Naive thymus-derived CD4-positive, alpha-beta T cell (primary cell): ENCODE measurements at regions of chr9 and their contacts with region 1.

Region 1: GRCh38 chr9:131253891-131254491 is 22.3 kb downstream of the FAM78A start:
- DNase-seq: peak in 1 of 9 donors; percentile 7
- ATAC-seq: no peak
- H3K4me3 ChIP-seq: no peak overlapping the region
- H3K4me3 Mint-ChIP-seq: peak overlapping the region; percentile 23 to 87 (median 52)
- H3K27ac ChIP-seq: peak overlapping the region; percentile 16
- H3K27ac Mint-ChIP-seq: peak overlapping the region; percentile 80 to 99 (median 96)
- H3K4me1 ChIP-seq: peaks cover 63 to 73% of the 10 kb centered on the region in 2 donors
- H3K4me1 Mint-ChIP-seq: peaks cover 13 to 74% (median 57%) of the 10 kb centered on the region in 7 donors
- H3K27me3 ChIP-seq: no peaks in the 10 kb centered on the region
- H3K27me3 Mint-ChIP-seq: no peaks in the 10 kb centered on the region

Region 2: DNA sequence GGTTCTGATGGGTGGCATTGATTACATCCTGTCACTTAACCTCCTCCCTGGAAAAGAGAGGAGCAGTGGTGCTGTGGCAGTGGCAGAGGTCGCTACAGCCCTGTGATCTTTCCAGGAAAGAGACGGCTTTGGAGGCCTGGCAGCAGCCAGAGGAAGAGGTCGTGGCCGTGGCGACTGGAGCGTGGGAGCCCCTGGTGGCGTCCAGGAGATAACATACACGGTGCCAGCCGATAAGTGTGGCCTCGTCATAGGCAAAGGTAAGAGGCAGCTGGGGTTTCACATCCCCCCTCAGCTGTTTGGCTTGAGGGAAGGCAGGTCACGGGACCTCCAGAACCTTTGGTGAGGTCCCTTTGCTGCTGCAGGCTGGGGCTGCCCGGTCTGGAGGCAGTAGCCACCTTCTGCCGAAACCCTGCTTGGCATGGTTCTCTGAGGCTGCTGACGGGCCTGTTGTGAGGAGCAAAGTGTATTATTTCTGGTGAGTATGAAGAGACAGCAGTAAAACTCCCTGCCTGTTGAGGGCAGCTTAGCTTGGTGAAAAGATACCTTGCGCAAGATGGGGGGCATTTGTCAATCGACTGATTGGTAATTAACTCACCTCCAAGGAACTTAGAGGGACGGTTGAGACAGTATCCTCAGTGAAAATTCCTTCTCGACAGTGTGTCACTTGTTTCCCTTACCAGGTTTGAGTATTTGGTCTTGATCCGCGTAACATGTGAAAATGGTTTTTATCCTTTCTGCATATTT is 627.6 kb before region 1 on chr9:
- CTCF ChIA-PET with region 1: no interaction called
- POLR2A ChIA-PET with region 1: no interaction called
- intact Hi-C with region 1: no loop called
- DNase-seq: no peak
- ATAC-seq: no peak
- H3K4me3 ChIP-seq: no peak overlapping the region
- H3K4me3 Mint-ChIP-seq: no peak overlapping the region
- H3K27ac ChIP-seq: no peak overlapping the region
- H3K27ac Mint-ChIP-seq: peak overlapping the region in 1 of 9 donors; percentile 52
- H3K4me1 ChIP-seq: no peaks in the 10 kb centered on the region
- H3K4me1 Mint-ChIP-seq: no peaks in the 10 kb centered on the region
- H3K27me3 ChIP-seq: no peaks in the 10 kb centered on the region
- H3K27me3 Mint-ChIP-seq: no peaks in the 10 kb centered on the region

Region 3: DNA sequence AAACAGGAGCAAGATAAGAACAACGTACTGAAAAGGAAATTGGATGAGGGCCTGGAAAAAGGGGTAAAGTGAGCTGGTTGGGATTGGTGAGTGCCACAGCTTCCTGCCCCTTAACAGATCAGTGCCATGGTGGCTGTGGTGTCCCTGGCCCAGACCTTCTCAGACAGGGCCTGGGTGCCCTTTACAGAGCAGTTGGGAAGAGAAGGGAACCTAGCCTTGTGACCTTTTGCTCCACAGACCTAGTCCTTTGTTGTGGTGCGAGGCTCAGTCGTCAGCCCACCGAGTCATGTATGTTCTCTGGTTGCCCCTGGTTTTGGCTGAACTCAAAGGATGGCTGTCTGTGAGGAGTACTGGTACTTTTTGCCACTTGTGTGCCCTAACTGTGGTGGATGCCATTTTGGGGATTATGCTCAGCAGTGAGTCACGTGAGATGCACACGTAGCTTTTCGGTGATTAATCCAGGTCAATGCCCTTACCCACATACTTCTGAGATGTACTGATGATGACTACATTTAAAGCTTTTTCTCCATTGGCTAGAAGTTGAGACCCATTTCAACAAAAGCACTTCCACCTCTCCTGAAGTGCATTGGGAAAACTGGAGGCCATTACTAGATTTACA is 512.1 kb before region 1 on chr9:
- CTCF ChIA-PET with region 1: no interaction called
- POLR2A ChIA-PET with region 1: no interaction called
- intact Hi-C with region 1: no loop called
- DNase-seq: no peak
- ATAC-seq: no peak
- H3K4me3 ChIP-seq: no peak overlapping the region
- H3K4me3 Mint-ChIP-seq: no peak overlapping the region
- H3K27ac ChIP-seq: no peak overlapping the region
- H3K27ac Mint-ChIP-seq: no peak overlapping the region
- H3K4me1 ChIP-seq: no peaks in the 10 kb centered on the region
- H3K4me1 Mint-ChIP-seq: peaks cover 0 to 21% (median 8%) of the 10 kb centered on the region in 7 donors
- H3K27me3 ChIP-seq: no peaks in the 10 kb centered on the region
- H3K27me3 Mint-ChIP-seq: no peaks in the 10 kb centered on the region

Region 4: DNA sequence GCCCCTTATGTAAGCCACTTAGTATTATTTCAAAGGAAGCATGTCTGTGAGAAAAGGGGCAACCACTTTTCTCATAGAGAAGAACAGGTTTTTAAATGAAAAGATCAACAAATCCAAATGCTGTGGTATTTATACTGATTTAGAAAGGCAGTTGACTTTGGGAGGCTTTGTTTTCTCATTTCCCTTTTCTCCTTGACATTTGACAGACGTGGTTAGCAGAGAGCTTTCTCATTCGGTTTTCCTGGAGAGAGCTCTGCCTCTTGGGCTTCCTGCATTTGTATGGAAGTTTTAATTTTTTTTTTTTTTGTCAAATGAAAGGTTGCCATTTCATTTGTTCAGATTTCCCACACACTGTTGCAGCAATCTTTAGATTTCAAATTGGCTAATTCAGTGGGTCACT is 498.0 kb before region 1 on chr9:
- CTCF ChIA-PET with region 1: no interaction called
- POLR2A ChIA-PET with region 1: no interaction called
- intact Hi-C with region 1: no loop called
- DNase-seq: no peak
- ATAC-seq: no peak
- H3K4me3 ChIP-seq: no peak overlapping the region
- H3K4me3 Mint-ChIP-seq: no peak overlapping the region
- H3K27ac ChIP-seq: no peak overlapping the region
- H3K27ac Mint-ChIP-seq: no peak overlapping the region
- H3K4me1 ChIP-seq: no peaks in the 10 kb centered on the region
- H3K4me1 Mint-ChIP-seq: peaks cover 0 to 36% (median 26%) of the 10 kb centered on the region in 7 donors
- H3K27me3 ChIP-seq: no peaks in the 10 kb centered on the region
- H3K27me3 Mint-ChIP-seq: no peaks in the 10 kb centered on the region

Region 5: GRCh38 chr9:131237931-131238401 is 16.0 kb before region 1 on chr9:
- CTCF ChIA-PET with region 1: interaction called, 4 read pairs
- POLR2A ChIA-PET with region 1: interaction called, 132 read pairs
- intact Hi-C with region 1: loop called (anchors 1 kb)
- DNase-seq: peak; percentile 59 to 89 (median 84)
- ATAC-seq: peak; percentile 94
- H3K4me3 ChIP-seq: peak overlapping the region; percentile 18
- H3K4me3 Mint-ChIP-seq: peak overlapping the region; percentile 79 to 89 (median 82)
- H3K27ac ChIP-seq: peak overlapping the region; percentile 69
- H3K27ac Mint-ChIP-seq: peak overlapping the region; percentile 88 to 97 (median 96)
- H3K4me1 ChIP-seq: peaks cover 42 to 43% of the 10 kb centered on the region in 2 donors
- H3K4me1 Mint-ChIP-seq: peaks cover 29 to 61% (median 48%) of the 10 kb centered on the region in 7 donors
- H3K27me3 ChIP-seq: no peaks in the 10 kb centered on the region
- H3K27me3 Mint-ChIP-seq: no peaks in the 10 kb centered on the region

Region 6: DNA sequence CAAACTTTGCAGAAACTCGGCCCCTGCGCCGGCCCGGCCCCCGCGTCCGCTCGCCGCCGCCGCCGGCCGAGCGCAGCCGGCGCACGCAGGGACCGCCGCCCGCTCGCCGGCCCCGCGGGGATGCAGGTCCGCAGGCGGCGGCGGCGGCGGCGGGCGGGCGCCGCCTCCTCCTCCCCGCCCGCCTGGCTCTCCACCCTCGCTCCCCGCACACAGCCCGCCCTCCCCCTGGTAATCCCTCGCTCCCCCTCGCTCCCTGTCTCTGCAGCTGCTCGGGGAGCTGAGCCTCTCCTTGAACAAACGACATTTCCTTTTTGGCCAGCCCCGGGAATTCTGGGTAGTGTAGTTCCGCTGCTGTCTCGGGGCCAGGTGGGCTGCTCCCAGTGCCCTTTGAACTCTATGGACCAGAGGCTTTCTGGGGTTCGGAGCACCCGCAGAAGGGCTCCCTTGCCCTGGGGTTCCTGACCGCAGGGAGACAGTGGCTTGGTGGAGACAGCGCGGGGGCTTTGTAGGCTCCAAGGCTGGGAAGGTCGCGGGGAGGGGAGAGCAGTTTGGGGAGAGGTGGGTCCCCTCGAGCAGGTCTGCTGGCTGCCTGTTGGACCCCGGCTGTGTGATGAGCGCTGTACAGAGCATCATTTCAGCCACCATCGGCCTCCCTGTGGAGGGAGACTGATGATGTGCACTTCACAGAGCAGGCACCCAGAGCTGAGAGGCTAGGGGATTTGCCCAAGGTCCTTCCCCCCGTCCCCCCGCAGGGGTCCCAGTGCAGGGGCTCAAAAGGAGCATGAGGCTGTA is 24.1 kb after region 1 on chr9:
- CTCF ChIA-PET with region 1: interaction called, 10 read pairs
- POLR2A ChIA-PET with region 1: interaction called, 886 read pairs
- intact Hi-C with region 1: loop called in 1 of 2 experiments (anchors 1 kb)
- DNase-seq: peak in 8 of 9 donors; percentile 47 to 77 (median 62)
- ATAC-seq: peak; percentile 67
- H3K4me3 ChIP-seq: peak overlapping the region; percentile 55
- H3K4me3 Mint-ChIP-seq: peak overlapping the region; percentile 83 to 97 (median 88)
- H3K27ac ChIP-seq: peak overlapping the region; percentile 96
- H3K27ac Mint-ChIP-seq: peak overlapping the region; percentile 84 to 95 (median 91)
- H3K4me1 ChIP-seq: peaks cover 21 to 23% of the 10 kb centered on the region in 2 donors
- H3K4me1 Mint-ChIP-seq: peaks cover 17 to 34% (median 27%) of the 10 kb centered on the region in 7 donors
- H3K27me3 ChIP-seq: no peaks in the 10 kb centered on the region
- H3K27me3 Mint-ChIP-seq: peaks cover 0 to 18% (median 0%) of the 10 kb centered on the region in 5 donors

Region 7: DNA sequence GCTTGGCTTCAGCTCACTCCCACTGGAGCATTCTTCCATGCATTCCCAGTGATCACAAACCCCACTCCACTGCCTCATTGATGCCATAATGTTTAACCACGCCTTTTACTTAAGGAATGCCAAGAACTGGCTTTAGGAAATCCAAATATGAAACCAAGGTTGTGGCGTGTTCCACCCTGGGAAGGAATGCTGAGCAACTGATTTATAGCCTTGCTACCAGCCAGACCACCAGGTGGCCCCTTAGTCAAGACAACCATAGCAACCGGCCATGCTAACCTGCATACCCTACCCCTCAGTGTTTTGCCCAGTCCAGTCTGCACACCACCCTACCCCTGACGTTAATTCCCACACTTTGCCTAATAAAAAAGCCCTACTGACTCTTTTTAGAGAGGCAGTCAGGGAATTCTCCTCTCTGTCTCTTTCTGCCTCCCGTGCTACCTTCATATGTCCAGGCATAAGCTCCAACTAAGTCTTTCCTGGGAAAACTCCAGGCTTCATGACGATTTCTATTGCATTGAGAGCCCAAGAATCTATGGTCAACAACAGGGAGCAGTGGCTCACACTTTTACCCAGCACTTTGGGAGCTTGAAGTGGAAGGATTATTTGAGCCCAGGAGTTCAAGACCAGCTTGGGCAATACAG is 112.9 kb after region 1 on chr9:
- CTCF ChIA-PET with region 1: no interaction called
- POLR2A ChIA-PET with region 1: interaction called, 13 read pairs
- intact Hi-C with region 1: no loop called
- DNase-seq: no peak
- ATAC-seq: no peak
- H3K4me3 ChIP-seq: no peak overlapping the region
- H3K4me3 Mint-ChIP-seq: no peak overlapping the region
- H3K27ac ChIP-seq: no peak overlapping the region
- H3K27ac Mint-ChIP-seq: peak overlapping the region in 1 of 9 donors; percentile 31
- H3K4me1 ChIP-seq: peaks cover 0 to under 1% of the 10 kb centered on the region in 2 donors
- H3K4me1 Mint-ChIP-seq: peaks cover 1 to 43% (median 19%) of the 10 kb centered on the region in 7 donors
- H3K27me3 ChIP-seq: no peaks in the 10 kb centered on the region
- H3K27me3 Mint-ChIP-seq: no peaks in the 10 kb centered on the region

Region 8: DNA sequence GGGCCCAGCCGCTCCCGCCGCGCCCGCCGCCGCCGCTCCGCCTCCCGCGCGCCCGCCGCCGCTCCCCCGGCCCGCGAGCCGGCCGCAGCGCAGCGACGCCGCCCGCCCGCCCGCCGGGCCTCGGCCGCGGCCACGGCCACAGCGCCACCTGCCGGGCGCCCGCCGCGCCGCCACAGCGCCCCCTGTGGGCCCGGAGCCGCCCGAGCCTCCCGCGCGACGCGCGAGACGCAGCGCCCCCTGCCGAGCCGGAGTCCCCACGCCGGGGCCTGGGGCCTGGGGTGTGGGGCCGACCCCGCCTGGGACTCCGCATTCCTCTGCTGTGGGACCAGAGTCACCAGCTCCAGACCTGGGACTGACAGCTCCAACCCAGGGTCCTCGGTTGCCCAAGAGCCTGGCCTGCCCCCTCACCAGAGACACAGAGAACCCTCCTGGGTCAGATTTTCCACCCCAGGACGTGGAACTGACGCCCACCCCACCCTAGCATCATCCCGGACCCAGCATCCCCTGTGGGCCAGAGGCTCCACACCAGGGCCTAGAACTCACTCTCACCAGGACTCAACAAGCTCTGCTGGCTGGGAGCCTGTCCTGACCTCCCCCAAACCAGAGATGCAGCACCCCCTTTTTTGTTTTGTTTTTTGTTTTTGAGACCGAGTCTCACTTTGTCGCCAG is 486.1 kb after region 1 on chr9 and contains the start of gene RAPGEF1:
- CTCF ChIA-PET with region 1: no interaction called
- POLR2A ChIA-PET with region 1: no interaction called
- intact Hi-C with region 1: loop called in 1 of 2 experiments (anchors 10 kb)
- DNase-seq: peak; percentile 65 to 99 (median 80)
- ATAC-seq: peak; percentile 94
- H3K4me3 ChIP-seq: peak within 1 kb of the TSS; percentile 80
- H3K4me3 Mint-ChIP-seq: peak within 1 kb of the TSS; percentile 80 to 96 (median 92)
- H3K27ac ChIP-seq: peak within 1 kb of the TSS; percentile 68
- H3K27ac Mint-ChIP-seq: peak within 1 kb of the TSS; percentile 80 to 97 (median 92)
- H3K4me1 ChIP-seq: peaks cover 51 to 62% of the 10 kb centered on the region in 2 donors
- H3K4me1 Mint-ChIP-seq: peaks cover 43 to 63% (median 59%) of the 10 kb centered on the region in 7 donors
- H3K27me3 ChIP-seq: no peaks in the 10 kb centered on the region
- H3K27me3 Mint-ChIP-seq: no peaks in the 10 kb centered on the region
- total RNA-seq, gene RAPGEF1: 81.1 to 181 (median 85.8) TPM